Ascending aorta (tissue), 2 donors: ENCODE measurements at regions of chr1 and their contacts with region 1.

Region 1: DNA sequence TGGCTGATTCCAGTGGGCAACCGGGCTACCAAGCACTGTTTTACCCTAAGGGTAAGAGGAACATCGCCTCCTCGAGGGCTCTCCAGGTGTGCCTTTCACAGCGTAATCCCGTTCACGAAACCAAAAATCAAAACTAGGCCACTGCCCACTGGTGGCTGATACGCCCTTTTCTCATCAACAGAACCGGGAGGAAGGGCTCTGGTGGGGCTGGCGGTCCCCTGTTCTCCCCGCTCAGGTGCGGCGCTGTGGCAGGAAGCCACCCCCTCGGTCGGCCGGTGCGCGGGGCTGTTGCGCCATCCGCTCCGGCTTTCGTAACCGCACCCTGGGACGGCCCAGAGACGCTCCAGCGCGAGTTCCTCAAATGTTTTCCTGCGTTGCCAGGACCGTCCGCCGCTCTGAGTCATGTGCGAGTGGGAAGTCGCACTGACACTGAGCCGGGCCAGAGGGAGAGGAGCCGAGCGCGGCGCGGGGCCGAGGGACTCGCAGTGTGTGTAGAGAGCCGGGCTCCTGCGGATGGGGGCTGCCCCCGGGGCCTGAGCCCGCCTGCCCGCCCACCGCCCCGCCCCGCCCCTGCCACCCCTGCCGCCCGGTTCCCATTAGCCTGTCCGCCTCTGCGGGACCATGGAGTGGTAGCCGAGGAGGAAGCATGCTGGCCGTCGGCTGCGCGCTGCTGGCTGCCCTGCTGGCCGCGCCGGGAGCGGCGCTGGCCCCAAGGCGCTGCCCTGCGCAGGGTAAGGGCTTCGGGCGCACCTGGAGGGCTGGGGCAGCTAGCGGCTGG is at the start of gene IL6R:
- DNase-seq: peak; percentile 75 to 97
- H3K4me3 ChIP-seq: peak within 1 kb of the TSS; percentile 69 to 73
- H3K27ac ChIP-seq: peak within 1 kb of the TSS; percentile 93 to 94
- H3K4me1 ChIP-seq: peaks cover 0 to 13% of the 10 kb centered on the region in 2 donors
- H3K27me3 ChIP-seq: no peaks in the 10 kb centered on the region
- CTCF ChIP-seq: peak; percentile 30 to 61 (median 50)
- total RNA-seq, gene IL6R: 6.7 TPM

Region 2: DNA sequence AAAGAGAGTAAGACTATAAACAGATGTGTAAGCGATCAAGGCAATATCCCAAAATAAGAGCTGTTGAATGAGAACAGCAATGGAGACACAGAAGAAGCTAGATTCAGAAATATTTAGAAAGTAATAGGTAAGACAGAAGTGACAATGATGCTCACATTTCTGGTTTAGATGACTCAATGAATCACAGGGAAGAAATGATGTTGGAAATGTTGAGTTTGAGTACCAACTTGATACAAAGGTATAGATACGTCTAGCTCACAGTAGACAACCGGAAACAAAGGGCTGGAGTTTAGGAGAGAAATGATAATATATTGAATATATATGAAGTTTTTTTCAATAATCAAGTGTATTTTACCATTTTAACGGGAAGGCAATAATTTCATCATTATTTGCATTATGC is 488.9 kb before region 1 on chr1:
- intact Hi-C with region 1: no loop called
- DNase-seq: no peak
- H3K4me3 ChIP-seq: no peak overlapping the region
- H3K27ac ChIP-seq: no peak overlapping the region
- H3K4me1 ChIP-seq: peaks cover 6 to 20% of the 10 kb centered on the region in 2 donors
- H3K27me3 ChIP-seq: no peaks in the 10 kb centered on the region
- CTCF ChIP-seq: no peak

Region 3: GRCh38 chr1:154344977-154345837 is 60.0 kb before region 1 on chr1:
- intact Hi-C with region 1: no loop called
- DNase-seq: peak in 1 of 2 donors; percentile 70
- H3K4me3 ChIP-seq: no peak overlapping the region
- H3K27ac ChIP-seq: no peak overlapping the region
- H3K4me1 ChIP-seq: no peaks in the 10 kb centered on the region
- H3K27me3 ChIP-seq: no peaks in the 10 kb centered on the region
- CTCF ChIP-seq: peak; percentile 29 to 51 (median 49)

Region 4: GRCh38 chr1:154419620-154420571 is 14.7 kb after region 1 on chr1:
- intact Hi-C with region 1: loop called (anchors 1 kb)
- DNase-seq: peak; percentile 96 to 98
- H3K4me3 ChIP-seq: peak overlapping the region; percentile 38 to 49
- H3K27ac ChIP-seq: peak overlapping the region; percentile 91 to 93
- H3K4me1 ChIP-seq: peaks cover 22 to 49% of the 10 kb centered on the region in 2 donors
- H3K27me3 ChIP-seq: no peaks in the 10 kb centered on the region
- CTCF ChIP-seq: no peak

Region 5: DNA sequence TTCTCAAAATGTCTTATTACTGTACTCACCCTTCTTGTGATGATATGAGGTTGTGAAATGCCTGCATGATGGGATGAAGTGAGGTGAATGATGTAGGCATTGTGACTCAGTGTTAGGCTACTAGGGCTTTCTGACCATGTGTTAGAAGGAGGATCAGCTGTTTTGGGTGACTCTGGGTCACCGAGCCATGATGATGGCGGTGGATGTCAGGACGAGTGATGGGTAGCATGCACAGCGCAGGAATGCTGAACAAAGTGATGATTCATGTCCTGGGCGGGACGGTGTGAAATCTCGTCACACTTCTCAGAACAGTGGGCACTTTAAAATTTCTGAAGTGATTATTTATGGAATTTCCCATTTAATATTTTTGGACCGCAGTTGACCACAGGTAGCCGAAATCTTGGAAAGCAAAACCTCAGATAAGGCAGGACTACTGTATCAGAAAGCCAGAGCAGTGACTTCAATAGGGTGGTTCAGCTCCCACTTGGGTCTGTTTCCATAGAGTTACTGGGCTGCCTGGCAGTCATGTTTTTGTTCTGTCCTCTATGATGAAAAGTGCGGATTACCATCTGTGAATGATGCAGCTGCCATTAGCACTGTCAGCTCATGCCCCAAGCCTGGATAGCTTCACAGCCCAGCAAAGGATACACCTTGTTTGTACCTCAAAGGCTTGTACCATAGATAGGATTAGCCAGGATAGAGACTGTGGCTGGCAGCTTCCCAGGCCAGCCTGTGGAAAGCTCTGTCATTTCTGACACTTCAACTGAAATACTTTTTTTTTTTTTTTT is 26.6 kb after region 1 on chr1:
- intact Hi-C with region 1: loop called (anchors 1 kb)
- DNase-seq: peak; percentile 68 to 76
- H3K4me3 ChIP-seq: no peak overlapping the region
- H3K27ac ChIP-seq: no peak overlapping the region
- H3K4me1 ChIP-seq: peaks cover 0 to 21% of the 10 kb centered on the region in 2 donors
- H3K27me3 ChIP-seq: no peaks in the 10 kb centered on the region
- CTCF ChIP-seq: no peak

Region 6: DNA sequence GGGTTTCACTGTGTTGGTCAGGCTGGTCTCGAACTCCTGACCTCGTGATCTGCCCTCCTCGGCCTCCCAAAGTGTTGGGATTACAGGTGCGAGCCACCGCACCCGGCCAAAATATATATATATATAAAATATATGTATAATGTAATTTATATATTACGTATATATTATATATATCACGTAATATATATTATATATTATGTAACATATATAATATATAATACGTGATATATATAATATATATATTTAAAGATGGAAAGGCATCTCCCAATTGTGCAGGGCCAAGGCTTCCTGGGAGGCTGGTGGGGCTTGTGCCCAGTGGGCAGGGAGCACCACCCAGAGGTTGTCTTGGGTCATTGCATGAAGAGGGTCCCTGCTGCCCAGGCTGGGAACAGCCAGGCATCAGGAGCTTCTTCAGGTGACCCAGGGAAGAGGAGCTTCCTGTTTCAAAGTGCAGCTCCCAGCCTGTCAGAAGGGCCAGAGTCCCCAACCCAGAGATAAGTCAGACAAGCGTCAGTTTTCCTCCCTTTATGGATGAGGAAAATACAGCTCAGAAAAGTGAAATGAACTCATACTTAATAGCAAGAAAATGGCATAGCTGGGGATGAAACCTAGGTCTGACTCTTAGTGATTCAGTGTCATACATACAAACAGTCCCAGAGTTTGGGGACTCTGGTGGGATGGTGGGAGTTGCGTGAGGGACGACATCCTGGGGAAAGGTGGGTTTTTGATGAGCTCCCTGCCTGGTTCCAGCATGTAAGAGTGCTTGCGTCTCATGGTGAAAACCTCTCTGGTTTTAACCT is 141.3 kb after region 1 on chr1:
- intact Hi-C with region 1: loop called (anchors 2 kb)
- DNase-seq: no peak
- H3K4me3 ChIP-seq: no peak overlapping the region
- H3K27ac ChIP-seq: no peak overlapping the region
- H3K4me1 ChIP-seq: no peaks in the 10 kb centered on the region
- H3K27me3 ChIP-seq: no peaks in the 10 kb centered on the region
- CTCF ChIP-seq: peak; percentile 49 to 64 (median 59)